H1 (cell line): ENCODE measurements at regions of chr15 and their contacts with region 1.

Region 1: DNA sequence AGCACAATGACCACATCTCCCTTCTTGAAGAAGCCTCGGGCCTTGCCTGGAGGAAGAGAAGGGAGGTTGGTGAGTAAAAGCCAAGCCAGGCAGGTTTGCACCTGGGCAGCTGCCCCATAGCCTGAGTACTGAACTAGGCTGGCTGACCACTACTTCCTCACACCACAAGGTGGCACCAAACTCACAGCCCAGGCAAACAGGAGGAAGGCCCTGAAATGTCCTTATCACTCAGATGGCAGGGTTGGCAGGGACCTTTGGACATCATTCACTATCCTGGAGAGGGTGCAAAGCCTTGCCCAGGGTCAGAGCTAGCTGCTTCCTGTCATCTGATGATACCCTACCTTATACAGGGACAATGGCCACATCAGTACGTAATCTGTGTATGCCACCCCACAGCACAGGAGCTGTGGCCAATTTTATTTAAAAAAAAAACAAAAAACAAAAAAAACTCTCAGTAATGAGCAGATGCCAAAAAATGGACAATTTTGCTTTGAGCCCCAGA is 2.2 kb upstream of the GRAMD2A start:
- DNase-seq: peak in 1 of 2 experiments; percentile 86
- H3K4me3 ChIP-seq: no peak overlapping the region
- H3K27ac ChIP-seq: no peak overlapping the region
- H3K4me1 ChIP-seq: peaks cover 0 to 8% (median 4%) of the 10 kb centered on the region in 4 experiments; a peak in 5 of 7 replicates
- H3K27me3 ChIP-seq: peaks cover 7 to 21% (median 17%) of the 10 kb centered on the region in 4 experiments; a peak in 6 of 7 replicates
- CTCF ChIP-seq: peak; percentile 85 to 96 (median 94)
- EP300 ChIP-seq: no peak
- POLR2A ChIP-seq: no peak
- RAD21 ChIP-seq: peak; percentile 87

Region 2: GRCh38 chr15:72222259-72222832 is 22.6 kb after region 1 on chr15:
- CTCF ChIA-PET with region 1: interaction called, 32 read pairs
- POLR2A ChIA-PET with region 1: interaction called, 21 read pairs
- DNase-seq: no peak
- H3K4me3 ChIP-seq: no peak overlapping the region
- H3K27ac ChIP-seq: no peak overlapping the region
- H3K4me1 ChIP-seq: peaks cover 3 to 11% (median 5%) of the 10 kb centered on the region in 4 experiments
- H3K27me3 ChIP-seq: no peaks in the 10 kb centered on the region
- CTCF ChIP-seq: no peak
- EP300 ChIP-seq: no peak
- POLR2A ChIP-seq: 0 out of 3 replicates have a peak, but pooled peaks of 1 of the 2 experiments have one; percentile 34
- RAD21 ChIP-seq: no peak

Region 3: GRCh38 chr15:72231066-72231846 is 31.5 kb after region 1 on chr15 and contains the start of gene PKM:
- CTCF ChIA-PET with region 1: interaction called, 32 read pairs
- POLR2A ChIA-PET with region 1: interaction called, 33 read pairs
- DNase-seq: peak; percentile 95 to 98
- H3K4me3 ChIP-seq: peak within 1 kb of the TSS; percentile 67 to 99 (median 92)
- H3K27ac ChIP-seq: peak within 1 kb of the TSS; percentile 74
- H3K4me1 ChIP-seq: peaks cover 3 to 25% (median 19%) of the 10 kb centered on the region in 4 experiments
- H3K27me3 ChIP-seq: peaks cover 2 to 32% (median 18%) of the 10 kb centered on the region in 4 experiments; a peak in 6 of 7 replicates
- CTCF ChIP-seq: no peak
- EP300 ChIP-seq: peak in 1 of 2 experiments; percentile 80; a peak in 2 of 3 replicates
- POLR2A ChIP-seq: peak; percentile 94 to 98
- RAD21 ChIP-seq: no peak
- total RNA-seq, gene PKM: 761 and 780 TPM in 2 replicates

Region 4: DNA sequence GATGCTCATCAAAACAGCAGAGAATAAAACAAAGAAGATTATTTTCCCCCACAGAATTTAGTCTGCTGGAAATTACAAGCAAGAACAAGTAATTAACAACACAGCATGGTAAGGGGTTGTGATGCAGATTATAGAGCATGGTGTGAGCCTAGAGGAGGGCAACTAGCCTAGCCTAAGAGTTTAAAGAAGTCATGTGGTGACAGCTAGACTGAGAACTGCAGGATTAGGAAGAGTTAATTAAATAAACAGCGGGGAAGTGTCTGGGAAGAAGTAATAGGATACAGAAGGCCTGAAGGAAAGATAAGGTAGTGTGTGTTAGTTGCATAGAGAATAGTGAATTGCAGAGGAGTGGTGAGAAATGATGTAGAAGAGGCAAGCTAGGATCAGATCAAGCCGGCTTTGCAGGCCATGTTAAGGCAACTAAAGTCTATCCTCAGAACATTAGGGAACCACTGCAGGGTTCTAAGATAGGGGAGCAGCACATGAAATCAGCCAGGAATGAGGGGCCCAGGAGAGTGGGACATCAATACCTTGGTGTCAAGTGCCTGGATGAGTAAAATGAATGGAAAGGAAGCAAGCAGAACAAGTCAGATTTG is 43.1 kb after region 1 on chr15:
- CTCF ChIA-PET with region 1: interaction called, 28 read pairs
- POLR2A ChIA-PET with region 1: no interaction called
- DNase-seq: no peak
- H3K4me3 ChIP-seq: no peak overlapping the region
- H3K27ac ChIP-seq: no peak overlapping the region
- H3K4me1 ChIP-seq: peaks cover 0 to 7% (median 0%) of the 10 kb centered on the region in 4 experiments; a peak in 2 of 7 replicates
- H3K27me3 ChIP-seq: peaks cover 25 to 65% (median 51%) of the 10 kb centered on the region in 4 experiments
- CTCF ChIP-seq: no peak
- EP300 ChIP-seq: peak in 1 of 2 experiments; percentile 53; a peak in 1 of 3 replicates
- POLR2A ChIP-seq: no peak
- RAD21 ChIP-seq: no peak

Region 5: GRCh38 chr15:72285927-72286516 is 86.3 kb after region 1 on chr15:
- CTCF ChIA-PET with region 1: interaction called, 23 read pairs
- POLR2A ChIA-PET with region 1: no interaction called
- DNase-seq: peak; percentile 27 to 72
- H3K4me3 ChIP-seq: no peak overlapping the region
- H3K27ac ChIP-seq: no peak overlapping the region
- H3K4me1 ChIP-seq: no peaks in the 10 kb centered on the region
- H3K27me3 ChIP-seq: 0 out of 7 replicates have a peak, but pooled peaks cover 0 to 3% (median 0%) of the 10 kb centered on the region in 4 experiments
- CTCF ChIP-seq: peak; percentile 75 to 90 (median 82)
- EP300 ChIP-seq: no peak
- POLR2A ChIP-seq: no peak
- RAD21 ChIP-seq: peak; percentile 36 to 43; a peak in 3 of 4 replicates

Region 6: DNA sequence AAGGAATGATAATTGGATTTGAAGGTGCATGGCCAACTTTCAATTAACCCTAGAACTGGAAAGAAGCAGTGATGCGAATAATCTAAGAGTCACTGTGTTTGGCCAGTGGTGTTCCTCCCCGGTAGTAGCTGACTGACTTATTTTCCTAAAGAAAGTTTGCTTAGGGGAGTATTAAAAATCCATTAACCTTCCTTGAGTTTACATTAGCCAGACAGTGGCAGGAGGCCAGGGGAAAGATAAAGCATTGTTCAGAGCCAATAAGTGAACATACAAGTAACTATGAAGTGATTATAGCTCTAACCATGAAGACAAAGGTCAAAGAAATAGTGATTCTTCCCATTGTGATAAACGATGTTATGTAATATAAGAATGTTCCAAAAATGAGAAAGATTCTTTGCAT is 189.5 kb after region 1 on chr15:
- CTCF ChIA-PET with region 1: no interaction called
- POLR2A ChIA-PET with region 1: no interaction called
- DNase-seq: no peak
- H3K4me3 ChIP-seq: no peak overlapping the region
- H3K27ac ChIP-seq: no peak overlapping the region
- H3K4me1 ChIP-seq: no peaks in the 10 kb centered on the region
- H3K27me3 ChIP-seq: no peaks in the 10 kb centered on the region
- CTCF ChIP-seq: no peak
- EP300 ChIP-seq: no peak
- POLR2A ChIP-seq: no peak
- RAD21 ChIP-seq: no peak